HAP-1 (cell line): ENCODE measurements at regions of chr5 and their contacts with region 1.

Region 1: DNA sequence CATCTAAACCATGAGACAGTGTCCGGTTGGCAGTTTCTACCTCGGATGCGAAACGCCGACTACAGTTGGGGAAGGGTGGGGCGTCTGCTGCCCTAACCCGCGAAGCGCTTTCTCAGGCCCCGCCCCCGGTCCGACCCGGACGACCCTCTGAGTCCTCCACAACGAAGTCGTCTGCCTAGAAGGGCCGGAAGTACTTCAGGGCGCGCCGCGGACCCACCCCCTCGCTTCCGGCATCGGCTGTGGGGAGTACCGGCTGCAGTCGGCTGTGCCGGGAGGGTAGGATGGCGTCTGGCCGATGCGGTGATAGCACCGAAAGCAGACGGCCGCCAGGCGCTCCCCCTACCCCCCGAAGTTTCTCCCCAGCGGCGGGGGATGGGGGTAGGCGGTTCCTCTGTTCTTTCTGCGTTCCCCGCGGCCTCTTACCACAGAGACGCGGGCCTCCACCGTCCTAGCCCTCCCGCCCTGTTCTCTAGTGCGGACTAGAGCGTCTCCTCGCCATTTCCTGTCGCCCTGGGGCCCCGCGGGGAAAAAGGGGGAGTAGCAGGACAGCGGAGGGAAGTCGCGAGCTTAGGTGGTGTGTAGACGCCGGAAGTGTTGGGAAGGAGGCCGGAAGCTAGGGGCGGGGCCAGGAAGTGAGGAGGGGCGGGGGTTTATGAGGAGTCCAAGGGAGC is at the start of gene TRIM41:
- DNase-seq: peak; percentile 94 to 99
- H3K4me3 ChIP-seq: peak within 1 kb of the TSS; percentile 88
- H3K4me1 ChIP-seq: peaks cover 14% of the 10 kb centered on the region
- H3K27me3 ChIP-seq: no peaks in the 10 kb centered on the region

Region 2: DNA sequence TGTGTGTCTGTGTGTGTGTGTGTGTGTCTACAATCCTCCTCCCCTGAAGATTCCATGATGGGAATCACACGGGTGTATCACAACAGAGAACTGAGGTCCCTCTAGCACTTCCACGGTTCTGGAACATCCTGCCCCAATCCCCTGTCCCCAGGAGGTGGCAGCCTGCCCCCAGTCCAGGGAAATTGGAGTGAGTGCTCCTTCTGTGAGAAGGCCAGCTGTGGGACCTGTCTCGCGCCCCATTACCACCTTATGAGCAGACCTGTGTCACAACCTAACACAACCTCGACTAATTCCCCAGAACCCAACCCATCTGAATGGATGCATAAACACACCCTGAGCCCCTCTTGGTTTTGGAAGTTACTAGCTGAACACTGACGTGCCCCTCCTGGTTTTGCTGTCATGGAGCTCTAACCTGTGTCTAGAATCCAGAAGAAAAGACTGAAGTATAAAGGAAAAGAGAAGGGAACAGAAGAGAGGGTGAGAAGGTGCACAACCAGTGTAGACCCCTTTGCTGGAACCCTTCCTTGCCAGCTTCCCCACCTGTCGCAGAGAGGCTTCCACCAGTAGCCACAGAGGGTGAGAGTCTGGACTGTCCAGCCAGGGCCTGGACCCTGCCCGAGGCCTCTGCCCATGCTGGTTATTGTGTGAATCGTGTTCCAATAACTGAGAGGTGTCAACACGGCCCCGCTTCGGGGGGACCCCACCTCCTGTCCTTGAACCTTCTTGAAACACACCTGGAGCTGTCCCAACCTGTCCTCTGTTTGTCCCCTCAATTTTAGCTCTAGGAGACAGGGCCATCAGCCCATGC is 179.7 kb before region 1 on chr5:
- in situ Hi-C with region 1: no loop called
- DNase-seq: no peak
- H3K4me3 ChIP-seq: no peak overlapping the region
- H3K4me1 ChIP-seq: no peaks in the 10 kb centered on the region
- H3K27me3 ChIP-seq: peaks cover 37% of the 10 kb centered on the region

Region 3: GRCh38 chr5:181187500-181188213 is 35.5 kb before region 1 on chr5:
- in situ Hi-C with region 1: loop called (anchors 5 kb)
- DNase-seq: peak; percentile 75 to 92
- H3K4me3 ChIP-seq: peak overlapping the region; percentile 55
- H3K4me1 ChIP-seq: peaks cover 2% of the 10 kb centered on the region; the same call in 1 of the 2 replicates
- H3K27me3 ChIP-seq: no peaks in the 10 kb centered on the region